ENCODE measurements at regions of chr12 and their contacts with region 1.

Region 1: DNA sequence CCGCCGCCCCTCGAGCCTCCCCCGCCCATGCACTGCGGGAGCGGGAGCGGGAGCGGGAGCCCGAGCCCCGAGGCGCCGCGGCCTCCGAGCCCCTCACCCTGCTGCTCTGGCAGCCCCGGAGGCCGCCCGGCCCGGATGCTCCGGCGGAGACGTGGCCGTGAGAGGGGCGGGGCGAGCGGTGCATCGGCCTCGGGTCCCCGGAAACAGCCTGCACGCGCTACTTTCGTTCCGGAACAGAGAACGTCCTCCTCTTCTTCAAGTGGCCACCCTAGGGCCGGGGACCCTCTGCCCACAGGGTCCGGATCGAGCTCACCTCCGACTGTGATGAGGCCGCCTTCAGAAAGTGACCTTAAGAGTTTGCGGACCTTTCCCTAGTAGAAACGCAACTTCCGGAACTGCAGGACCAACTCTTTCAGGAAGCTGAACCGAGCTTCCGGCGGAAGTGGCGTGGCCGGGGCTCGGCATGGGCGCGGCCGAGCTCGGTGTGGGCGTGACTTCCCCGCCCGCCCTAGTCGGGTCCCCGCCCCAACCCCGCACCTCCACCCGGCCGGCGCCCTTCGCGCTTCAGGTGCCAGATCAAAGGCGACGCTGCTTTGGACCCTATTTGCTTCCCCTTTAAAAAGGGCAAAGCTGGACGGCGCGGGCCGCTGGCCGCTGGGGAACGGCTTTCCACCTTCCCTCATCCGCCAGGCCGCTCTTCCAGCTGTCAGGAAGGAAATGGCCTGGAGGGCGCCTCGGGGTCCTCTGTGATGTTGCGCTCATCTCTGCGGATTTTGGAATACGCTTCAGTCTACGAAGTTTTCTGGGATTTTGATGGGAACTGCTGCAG is at the start of gene GOLGA3:
- DNase-seq: peak; percentile 54 to 95
- H3K4me3 ChIP-seq: peak within 1 kb of the TSS; percentile 79 to 91
- H3K27ac ChIP-seq: peak within 1 kb of the TSS; percentile 98 to 99
- H3K4me1 ChIP-seq: peaks cover 9 to 16% of the 10 kb centered on the region in 2 donors
- H3K27me3 ChIP-seq: no peaks in the 10 kb centered on the region
- CTCF ChIP-seq: no peak
- total RNA-seq, gene GOLGA3: 173 TPM

Region 2: GRCh38 chr12:130871286-130872178 is 1957.4 kb before region 1 on chr12 and contains the start of gene RAN:
- intact Hi-C with region 1: loop called (anchors 5 kb)
- DNase-seq: peak; percentile 33 to 93
- H3K4me3 ChIP-seq: peak within 1 kb of the TSS; percentile 90 to 98
- H3K27ac ChIP-seq: peak within 1 kb of the TSS; percentile 74 to 87
- H3K4me1 ChIP-seq: peaks cover 3 to 17% of the 10 kb centered on the region in 2 donors
- H3K27me3 ChIP-seq: no peaks in the 10 kb centered on the region
- CTCF ChIP-seq: peak in 1 of 3 experiments; percentile 8
- total RNA-seq, gene RAN: 73.7 TPM

Region 3: DNA sequence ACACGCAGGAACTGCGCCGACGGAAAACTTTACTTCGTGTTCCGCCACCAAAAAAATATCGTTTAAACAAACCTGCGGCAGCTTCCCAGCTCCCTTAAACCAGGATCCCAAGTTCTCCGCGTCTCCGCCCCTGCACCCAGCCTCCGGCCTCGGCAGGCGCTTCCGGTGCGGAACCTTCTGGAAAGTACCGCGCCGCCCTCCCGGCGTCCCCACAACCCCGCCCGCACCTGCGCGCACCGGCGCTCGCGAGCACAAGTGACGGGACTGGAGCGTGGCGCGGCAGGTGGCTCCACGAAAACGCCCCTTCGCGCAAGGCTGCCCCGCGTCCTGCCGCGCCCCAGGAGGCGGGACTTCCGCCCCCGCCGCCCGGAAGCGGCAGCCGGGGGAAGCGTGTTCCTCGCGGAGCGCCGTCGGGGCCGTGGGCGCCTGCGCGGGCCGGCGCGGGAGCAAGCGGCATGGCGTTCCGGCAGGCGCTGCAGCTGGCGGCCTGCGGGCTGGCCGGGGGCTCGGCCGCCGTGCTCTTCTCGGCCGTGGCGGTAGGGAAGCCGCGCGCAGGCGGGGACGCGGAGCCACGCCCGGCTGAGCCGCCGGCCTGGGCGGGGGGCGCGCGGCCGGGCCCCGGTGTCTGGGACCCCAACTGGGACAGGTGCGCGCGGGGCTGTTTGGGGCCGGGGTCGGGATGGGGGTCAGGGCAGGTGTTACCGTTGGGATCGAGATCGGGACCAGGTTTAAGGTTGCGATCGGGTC is 118.3 kb before region 1 on chr12 and contains the start of gene PGAM5:
- intact Hi-C with region 1: loop called (anchors 1 kb)
- DNase-seq: peak; percentile 30 to 87
- H3K4me3 ChIP-seq: peak within 1 kb of the TSS; percentile 83 to 90
- H3K27ac ChIP-seq: peak within 1 kb of the TSS; percentile 58 to 79
- H3K4me1 ChIP-seq: peaks cover 0 to 14% of the 10 kb centered on the region in 2 donors
- H3K27me3 ChIP-seq: no peaks in the 10 kb centered on the region
- CTCF ChIP-seq: no peak
- total RNA-seq, gene PGAM5: 41.2 TPM

Region 4: DNA sequence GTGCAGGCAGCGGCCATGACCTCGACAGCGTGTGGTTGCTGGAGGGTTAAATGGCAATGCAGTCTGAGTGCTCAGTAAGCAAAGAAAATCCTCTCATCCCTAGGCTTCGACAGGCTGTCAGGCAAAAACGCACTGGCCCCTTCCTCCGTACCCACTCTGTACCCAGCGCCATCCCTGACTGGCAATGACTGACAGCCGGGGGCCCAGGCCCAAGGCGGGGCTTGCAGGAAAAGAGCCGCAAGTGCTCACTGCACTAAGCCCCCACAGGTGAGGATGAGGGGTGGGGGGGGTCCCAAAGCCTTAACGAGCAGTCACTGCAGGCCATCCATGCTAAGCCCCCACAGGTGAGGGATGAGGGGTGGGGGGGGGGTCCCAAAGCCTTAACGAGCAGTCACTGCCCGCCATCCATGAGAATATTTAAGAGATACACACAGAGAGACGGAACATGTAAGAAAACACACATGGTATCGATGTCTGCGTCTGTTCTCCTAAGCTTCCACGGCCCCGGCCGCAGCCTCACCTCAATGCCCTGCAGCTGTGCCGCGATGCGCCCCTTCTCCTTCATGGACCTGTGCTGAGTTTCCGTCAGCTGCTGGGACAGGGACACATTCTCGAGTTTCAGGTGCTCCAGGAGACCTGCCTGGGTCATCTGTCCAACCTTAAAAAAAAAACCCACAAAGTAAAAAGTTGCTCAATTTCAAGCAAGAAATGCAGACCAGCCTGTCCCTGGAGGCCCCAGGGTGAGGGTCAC is 30.9 kb before region 1 on chr12:
- intact Hi-C with region 1: no loop called
- DNase-seq: no peak
- H3K4me3 ChIP-seq: no peak overlapping the region
- H3K27ac ChIP-seq: no peak overlapping the region
- H3K4me1 ChIP-seq: no peaks in the 10 kb centered on the region
- H3K27me3 ChIP-seq: no peaks in the 10 kb centered on the region
- CTCF ChIP-seq: no peak

Region 5: DNA sequence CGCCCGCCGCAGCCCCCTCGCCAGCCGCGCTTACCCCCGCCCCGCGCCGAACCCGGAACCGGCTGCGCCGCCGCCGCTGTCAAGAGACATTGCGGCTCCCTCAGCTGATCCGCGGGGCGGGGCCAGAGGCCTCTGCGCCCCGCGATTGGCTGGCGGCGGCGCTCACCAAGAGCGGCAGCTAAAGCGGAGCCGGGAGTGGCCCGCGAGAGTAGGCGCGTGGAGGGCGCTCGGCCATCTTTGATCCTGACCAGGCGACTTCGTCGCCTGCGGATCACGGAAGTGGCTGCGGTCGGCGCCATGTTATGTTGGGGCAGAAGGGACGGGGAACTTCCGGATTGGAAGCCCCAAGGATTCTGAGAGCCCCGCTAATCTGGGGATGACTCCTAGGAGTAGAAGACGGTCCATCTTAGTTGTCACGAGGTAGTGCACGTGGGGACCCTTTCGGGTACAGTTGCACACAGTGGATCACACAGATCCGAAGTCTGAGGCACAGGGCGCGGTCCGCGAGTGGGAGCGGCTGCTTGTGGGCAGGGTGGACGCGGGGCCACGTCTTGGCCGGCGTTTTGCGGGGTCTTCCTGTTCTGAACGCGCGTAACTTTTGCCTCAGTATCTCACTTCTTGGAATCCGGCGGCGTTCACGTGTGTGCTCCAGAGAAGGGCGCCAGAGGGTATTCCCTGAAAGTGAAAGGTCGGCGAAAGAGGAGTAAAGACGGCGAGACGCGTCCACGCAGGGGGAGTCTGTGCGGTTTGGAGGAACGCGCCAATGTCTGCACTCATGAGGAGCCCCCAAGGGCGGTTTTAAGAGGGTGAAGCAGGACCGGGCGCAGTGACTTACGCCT is 58.8 kb after region 1 on chr12 and contains the start of gene CHFR:
- intact Hi-C with region 1: loop called (anchors 1 kb)
- DNase-seq: peak; percentile 92 to 98
- H3K4me3 ChIP-seq: peak within 1 kb of the TSS; percentile 76 to 80
- H3K27ac ChIP-seq: peak within 1 kb of the TSS; percentile 93 to 96
- H3K4me1 ChIP-seq: peaks cover 0 to 6% of the 10 kb centered on the region in 2 donors
- H3K27me3 ChIP-seq: no peaks in the 10 kb centered on the region
- CTCF ChIP-seq: no peak
- total RNA-seq, gene CHFR: 7.9 TPM

Region 6: GRCh38 chr12:132956011-132956788 is 127.3 kb after region 1 on chr12 and contains the start of gene ZNF605:
- intact Hi-C with region 1: loop called (anchors 5 kb)
- DNase-seq: peak; percentile 41 to 91
- H3K4me3 ChIP-seq: peak within 1 kb of the TSS; percentile 80 to 98
- H3K27ac ChIP-seq: peak within 1 kb of the TSS; percentile 89 to 92
- H3K4me1 ChIP-seq: peaks cover 0 to 2% of the 10 kb centered on the region in 2 donors
- H3K27me3 ChIP-seq: no peaks in the 10 kb centered on the region
- CTCF ChIP-seq: no peak
- total RNA-seq, gene ZNF605: 1.3 TPM

Region 7: DNA sequence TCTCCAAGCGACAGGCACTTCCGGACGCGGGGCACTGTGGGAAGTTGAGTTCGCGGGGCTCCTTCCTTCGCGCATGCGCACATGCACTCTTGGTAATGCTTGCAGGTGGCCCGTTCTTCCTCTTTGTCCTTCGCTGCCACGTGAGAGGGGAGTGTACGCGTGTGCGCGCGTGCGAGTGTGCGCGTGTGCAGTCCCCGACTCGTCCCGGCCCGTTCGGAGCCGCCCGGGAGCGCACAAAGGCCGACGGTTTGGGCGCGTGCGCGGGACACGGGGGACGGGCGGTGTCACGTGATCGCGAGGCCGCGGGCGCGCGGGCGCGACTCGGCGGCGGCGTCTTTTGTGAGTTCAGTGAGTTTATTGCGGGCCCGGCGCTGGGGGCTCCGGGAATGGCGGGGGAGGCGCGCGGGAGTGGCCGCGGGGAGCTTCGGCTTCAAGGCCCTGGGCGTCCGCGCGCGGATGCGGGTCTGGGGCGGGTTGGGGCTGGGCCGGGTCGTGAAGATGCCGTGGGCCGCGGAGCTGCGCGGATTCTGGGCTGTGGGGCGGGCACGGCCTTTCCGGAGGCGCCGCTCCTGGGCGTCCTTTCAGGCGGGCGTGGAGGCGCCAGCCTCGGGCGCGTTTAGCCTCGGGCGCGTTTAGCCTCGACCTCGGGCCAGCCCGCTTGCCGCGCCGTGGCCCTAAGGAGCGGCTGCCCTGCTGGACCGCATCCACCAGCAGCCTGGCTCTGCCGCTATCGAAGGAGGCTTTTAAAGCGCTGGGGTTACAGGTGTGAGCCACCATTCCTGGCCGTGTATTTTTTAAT is 208.5 kb after region 1 on chr12 and contains the start of gene ZNF84:
- intact Hi-C with region 1: loop called (anchors 5 kb)
- DNase-seq: peak; percentile 87 to 97
- H3K4me3 ChIP-seq: peak within 1 kb of the TSS; percentile 83 to 99
- H3K27ac ChIP-seq: peak within 1 kb of the TSS; percentile 95 to 98
- H3K4me1 ChIP-seq: peaks cover 0 to 3% of the 10 kb centered on the region in 2 donors
- H3K27me3 ChIP-seq: no peaks in the 10 kb centered on the region
- CTCF ChIP-seq: no peak
- total RNA-seq, gene ZNF84: 2.7 TPM